ENCODE measurements at regions of chr3 and their contacts with region 1.

Region 1: GRCh38 chr3:156906275-156906674 is 80.1 kb downstream of the LEKR1 start:
- DNase-seq: no peak
- H3K4me3 Mint-ChIP-seq: no peak overlapping the region
- H3K27ac Mint-ChIP-seq: no peak overlapping the region
- H3K4me1 Mint-ChIP-seq: no peaks in the 10 kb centered on the region
- H3K27me3 Mint-ChIP-seq: peaks cover 18% of the 10 kb centered on the region

Region 2: DNA sequence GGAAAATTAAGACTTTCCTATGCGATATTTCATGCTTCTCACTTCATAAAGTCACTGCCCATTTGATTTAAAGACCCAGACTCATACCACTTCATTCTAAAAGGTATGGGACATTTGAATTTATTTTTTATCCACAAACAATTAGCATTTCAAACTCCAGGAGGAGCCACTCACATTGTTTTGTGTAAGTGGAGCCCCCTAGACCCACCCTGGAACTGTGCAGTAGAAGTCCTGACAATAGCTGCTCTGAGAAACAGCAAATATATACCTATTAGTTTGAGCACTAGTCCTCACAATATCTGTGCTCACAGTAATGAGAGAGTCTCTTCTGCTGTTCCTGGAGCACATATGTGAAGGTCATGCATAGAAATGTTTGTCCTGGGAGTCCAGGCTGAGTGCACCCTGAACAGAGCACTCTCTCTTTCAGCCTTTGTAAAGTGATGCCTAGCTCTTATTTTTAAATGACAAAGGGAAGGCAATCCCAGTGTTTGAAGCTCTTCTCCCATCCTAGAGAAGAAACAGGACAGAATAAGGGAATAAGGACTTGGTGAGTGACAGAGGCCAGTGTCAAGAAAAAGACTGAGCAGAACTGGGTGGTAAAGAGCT is 1485.3 kb before region 1 on chr3:
- intact Hi-C with region 1: loop called (anchors 5 kb)
- DNase-seq: no peak
- H3K4me3 Mint-ChIP-seq: no peak overlapping the region
- H3K27ac Mint-ChIP-seq: no peak overlapping the region
- H3K4me1 Mint-ChIP-seq: no peaks in the 10 kb centered on the region
- H3K27me3 Mint-ChIP-seq: no peaks in the 10 kb centered on the region

Region 3: DNA sequence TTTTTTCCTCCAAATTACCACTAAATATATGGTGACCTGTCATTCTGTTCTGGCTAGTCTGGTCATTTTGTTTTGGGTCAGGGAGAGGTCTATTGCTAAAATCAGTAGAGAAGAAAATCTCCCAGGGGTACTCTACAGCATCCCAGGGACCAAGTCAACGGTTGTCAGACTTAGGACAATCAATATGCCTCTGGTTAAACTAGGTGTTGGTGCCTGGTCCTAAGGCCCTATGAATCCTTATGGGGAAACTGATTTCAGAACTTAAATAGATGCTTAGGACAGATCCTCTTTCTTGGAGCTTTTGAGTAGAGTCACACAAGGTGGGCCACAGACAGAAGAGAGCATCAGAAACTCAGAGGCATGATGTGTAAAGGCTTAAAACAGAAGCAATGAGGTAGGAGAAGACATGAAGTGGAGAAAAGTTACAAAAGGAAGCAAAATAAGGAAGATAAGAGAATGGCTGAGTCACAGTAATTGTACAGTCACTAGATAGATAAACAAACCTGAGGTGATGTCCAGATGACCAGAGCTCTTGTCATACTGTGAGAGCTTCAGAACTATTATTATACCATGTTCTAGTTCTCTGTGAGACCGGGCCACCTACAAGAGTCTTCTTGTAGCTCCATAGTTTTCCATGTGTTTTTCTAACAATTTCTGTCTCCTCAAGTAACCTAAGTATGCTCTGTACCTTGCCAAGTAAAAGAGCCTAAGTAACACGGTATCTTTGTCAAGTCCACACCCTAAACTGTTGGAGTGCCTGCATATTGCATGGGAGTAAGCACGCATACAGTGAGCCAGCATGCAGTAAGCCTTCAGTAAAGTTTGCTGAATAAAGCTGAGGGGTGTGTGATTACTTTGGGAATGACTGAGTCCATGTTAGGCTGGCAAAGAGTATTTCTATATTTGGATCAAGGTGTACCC is 124.7 kb before region 1 on chr3:
- intact Hi-C with region 1: no loop called
- DNase-seq: no peak
- H3K4me3 Mint-ChIP-seq: no peak overlapping the region
- H3K27ac Mint-ChIP-seq: no peak overlapping the region
- H3K4me1 Mint-ChIP-seq: peaks cover 6% of the 10 kb centered on the region
- H3K27me3 Mint-ChIP-seq: peaks cover 2% of the 10 kb centered on the region

Region 4: DNA sequence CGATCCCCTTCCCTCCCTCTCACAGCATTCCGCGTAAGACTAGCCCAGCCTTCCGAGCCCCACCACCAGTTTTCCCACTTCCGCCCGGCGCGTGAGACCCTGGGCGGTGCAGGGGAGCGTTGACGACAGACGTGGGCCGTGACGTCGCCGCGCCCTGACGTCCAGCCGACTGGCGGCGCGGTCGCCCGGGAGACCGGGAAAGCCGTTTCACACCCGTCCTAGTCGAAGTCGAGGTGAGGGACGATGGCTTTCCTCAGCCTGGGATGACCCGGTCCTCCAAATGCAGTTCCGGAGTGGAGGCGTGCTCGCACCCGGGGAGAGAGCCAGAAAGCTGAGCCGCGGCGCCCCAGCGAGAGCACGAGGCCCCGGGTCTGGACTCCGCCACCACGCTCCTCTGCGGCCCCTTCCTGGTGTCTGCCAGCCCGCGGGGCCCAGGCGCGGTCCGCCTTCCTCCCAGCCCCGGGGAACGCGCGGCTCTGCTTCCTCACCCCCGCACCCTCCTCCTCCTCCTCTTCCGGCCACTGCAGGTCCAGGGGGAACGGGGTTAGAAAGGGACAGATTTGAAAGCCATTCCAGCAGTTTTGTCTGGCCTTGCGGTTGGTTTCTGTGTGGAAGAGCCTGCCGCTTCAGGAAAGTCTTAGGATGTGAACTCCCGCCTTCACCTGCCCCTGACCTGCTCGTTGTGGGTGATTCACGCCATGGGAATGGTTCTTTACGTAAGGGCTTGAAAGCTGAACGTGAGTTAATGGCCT is 80.0 kb before region 1 on chr3 and contains the start of gene LEKR1:
- intact Hi-C with region 1: no loop called
- DNase-seq: peak; percentile 64
- H3K4me3 Mint-ChIP-seq: peak within 1 kb of the TSS; percentile 87
- H3K27ac Mint-ChIP-seq: peak within 1 kb of the TSS; percentile 92
- H3K4me1 Mint-ChIP-seq: peaks cover 36% of the 10 kb centered on the region
- H3K27me3 Mint-ChIP-seq: peaks cover 2% of the 10 kb centered on the region
- total RNA-seq, gene LEKR1: 0.57 TPM in 1 of 2 replicates, not detected in the other

Measured in activated T-helper 1 cell treated with anti-CD3 and anti-CD28 coated beads, Interleukin-12 subunit alpha, Interleukin-12 subunit beta, Interleukin-2, Interleukin-4 antibody, amounts not matched to agents 30 ng/mL and 10 ng/mL and 1 ng/mL, durations not matched to agents 14 hours and 24 hours and 36 hours (primary cell).